ENCODE measurements at regions of chr5 and their contacts with region 1.

Region 1: GRCh38 chr5:139633295-139634027 is 14.7 kb upstream of the CXXC5 start:
- DNase-seq: peak; percentile 71
- ATAC-seq: peak; percentile 47
- H3K4me3 Mint-ChIP-seq: no peak overlapping the region
- H3K27ac Mint-ChIP-seq: no peak overlapping the region
- H3K4me1 Mint-ChIP-seq: peaks cover 41% of the 10 kb centered on the region
- H3K27me3 Mint-ChIP-seq: no peaks in the 10 kb centered on the region
- CTCF ChIP-seq: peak; percentile 94

Region 2: GRCh38 chr5:139524932-139525585 is 108.4 kb before region 1 on chr5:
- CTCF ChIA-PET with region 1: interaction called, 13 read pairs
- POLR2A ChIA-PET with region 1: no interaction called
- DNase-seq: no peak
- ATAC-seq: no peak
- H3K4me3 Mint-ChIP-seq: no peak overlapping the region; the same call in 1 of the 2 replicates
- H3K27ac Mint-ChIP-seq: no peak overlapping the region; the same call in 1 of the 2 replicates
- H3K4me1 Mint-ChIP-seq: peaks cover 71% of the 10 kb centered on the region
- H3K27me3 Mint-ChIP-seq: peaks cover 17% of the 10 kb centered on the region
- CTCF ChIP-seq: no peak

Region 3: DNA sequence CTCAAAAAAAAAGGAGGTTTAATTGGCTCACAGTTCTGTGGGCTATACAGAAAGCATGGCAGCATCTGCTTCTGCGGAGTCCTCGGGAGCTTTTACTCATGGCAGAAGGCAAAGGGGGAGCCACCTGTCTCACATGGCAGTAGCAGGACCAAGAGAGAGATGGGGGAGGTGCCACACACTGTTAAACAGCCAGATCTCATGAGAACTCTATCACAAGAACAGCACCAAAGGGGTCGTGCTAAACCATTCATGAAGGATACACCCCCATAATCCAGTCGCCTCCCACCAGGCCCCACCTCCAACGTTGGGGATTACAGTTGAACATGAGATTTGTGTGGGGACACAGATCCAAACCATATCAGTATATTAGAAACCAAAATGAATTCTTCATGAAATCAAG is 13.6 kb before region 1 on chr5:
- CTCF ChIA-PET with region 1: interaction called, 10 read pairs
- POLR2A ChIA-PET with region 1: no interaction called
- DNase-seq: no peak
- ATAC-seq: no peak
- H3K4me3 Mint-ChIP-seq: no peak overlapping the region
- H3K27ac Mint-ChIP-seq: no peak overlapping the region
- H3K4me1 Mint-ChIP-seq: no peaks in the 10 kb centered on the region
- H3K27me3 Mint-ChIP-seq: no peaks in the 10 kb centered on the region
- CTCF ChIP-seq: no peak

Region 4: DNA sequence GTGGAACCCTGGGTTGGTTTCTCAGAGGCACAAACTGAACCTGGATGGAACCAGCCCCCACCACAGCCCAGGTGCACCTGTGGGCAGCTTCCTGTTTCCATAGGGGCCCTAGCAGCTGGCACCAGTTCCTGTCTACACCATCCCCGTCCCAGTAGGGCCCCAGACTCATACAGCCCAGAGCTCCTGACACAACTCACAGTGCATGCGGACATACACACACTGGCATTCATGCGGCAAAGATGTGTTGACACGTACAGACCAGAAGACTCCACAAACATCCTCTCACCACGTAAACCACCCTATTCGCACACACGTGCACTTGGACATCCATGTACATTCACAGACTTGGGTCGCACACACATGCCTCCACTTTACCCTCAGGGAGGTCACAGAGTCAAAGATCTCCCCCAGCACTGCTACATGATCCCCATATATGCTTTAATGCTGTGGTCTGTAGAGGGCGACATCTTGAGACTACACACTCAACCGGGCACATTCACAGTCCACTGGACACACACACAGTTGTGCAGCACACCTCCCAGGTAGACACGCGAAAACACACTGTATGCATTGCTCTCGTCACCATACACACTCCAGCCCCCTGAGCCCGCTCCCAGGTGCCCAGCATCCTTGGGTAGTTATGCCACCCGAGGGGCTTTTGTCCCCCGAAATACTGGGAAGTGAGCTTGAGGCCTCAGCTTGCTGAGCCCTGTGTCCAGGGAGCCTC is 37.1 kb after region 1 on chr5:
- CTCF ChIA-PET with region 1: interaction called, 17 read pairs
- POLR2A ChIA-PET with region 1: interaction called, 3 read pairs
- DNase-seq: no peak
- ATAC-seq: 0 out of 2 replicates have a peak, but pooled peaks have one; percentile 6
- H3K4me3 Mint-ChIP-seq: no peak overlapping the region
- H3K27ac Mint-ChIP-seq: peak overlapping the region; percentile 59
- H3K4me1 Mint-ChIP-seq: peaks cover 71% of the 10 kb centered on the region
- H3K27me3 Mint-ChIP-seq: no peaks in the 10 kb centered on the region
- CTCF ChIP-seq: no peak

Region 5: DNA sequence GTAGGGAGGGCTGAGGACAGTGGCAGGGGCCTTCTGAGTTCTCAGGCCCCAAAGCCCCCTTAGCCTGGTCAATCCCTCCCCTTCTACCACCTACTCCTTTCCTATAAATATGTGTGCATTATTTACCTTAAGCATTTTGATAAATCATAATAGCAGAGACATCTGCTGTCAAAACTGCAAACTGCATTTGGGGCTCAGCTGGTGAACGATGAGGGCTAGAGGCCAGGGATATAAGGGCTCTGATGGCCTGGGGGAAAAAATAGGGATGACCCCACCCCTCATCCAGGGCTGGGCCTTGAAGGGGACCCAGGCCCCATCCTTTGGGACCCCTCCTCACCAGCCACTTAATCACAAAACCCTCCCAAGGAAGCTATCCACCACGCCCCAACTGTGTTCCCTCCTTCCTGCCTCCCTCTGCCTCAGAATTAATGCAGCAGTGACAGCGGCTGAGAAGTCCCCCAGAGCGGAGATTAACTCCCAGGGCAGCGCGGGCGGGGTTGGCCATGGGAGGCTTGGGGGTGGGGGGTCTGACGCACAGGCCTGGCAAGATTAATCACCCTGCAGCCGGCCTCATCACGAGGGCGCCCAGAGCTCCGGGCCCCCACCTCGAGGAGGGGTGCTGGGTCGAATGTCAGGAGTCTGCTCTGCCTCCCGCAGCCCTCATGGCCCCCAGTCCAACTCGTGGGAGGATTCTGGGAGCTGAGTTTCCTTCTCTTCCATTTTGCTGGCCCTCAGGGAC is 56.8 kb after region 1 on chr5:
- CTCF ChIA-PET with region 1: interaction called, 37 read pairs
- POLR2A ChIA-PET with region 1: interaction called, 4 read pairs
- DNase-seq: no peak
- ATAC-seq: peak; percentile 11
- H3K4me3 Mint-ChIP-seq: peak overlapping the region; percentile 24; the same call in 1 of the 2 replicates
- H3K27ac Mint-ChIP-seq: peak overlapping the region; percentile 19; the same call in 1 of the 2 replicates
- H3K4me1 Mint-ChIP-seq: peaks cover 63% of the 10 kb centered on the region
- H3K27me3 Mint-ChIP-seq: peaks cover 24% of the 10 kb centered on the region
- CTCF ChIP-seq: no peak

Region 6: GRCh38 chr5:139711067-139711905 is 77.8 kb after region 1 on chr5:
- CTCF ChIA-PET with region 1: interaction called, 89 read pairs
- POLR2A ChIA-PET with region 1: interaction called, 19 read pairs
- DNase-seq: peak; percentile 75
- ATAC-seq: peak; percentile 10
- H3K4me3 Mint-ChIP-seq: peak overlapping the region; percentile 71
- H3K27ac Mint-ChIP-seq: peak overlapping the region; percentile 45
- H3K4me1 Mint-ChIP-seq: peaks cover 37% of the 10 kb centered on the region
- H3K27me3 Mint-ChIP-seq: peaks cover 7% of the 10 kb centered on the region
- CTCF ChIP-seq: no peak

Region 7: GRCh38 chr5:139787568-139788293 is 154.3 kb after region 1 on chr5:
- CTCF ChIA-PET with region 1: interaction called, 20 read pairs
- POLR2A ChIA-PET with region 1: no interaction called
- DNase-seq: peak; percentile 94
- ATAC-seq: peak; percentile 81
- H3K4me3 Mint-ChIP-seq: peak overlapping the region; percentile 91
- H3K27ac Mint-ChIP-seq: no peak overlapping the region
- H3K4me1 Mint-ChIP-seq: peaks cover 4% of the 10 kb centered on the region
- H3K27me3 Mint-ChIP-seq: peaks cover 66% of the 10 kb centered on the region
- CTCF ChIP-seq: peak; percentile 98